WTC11 (cell line): ENCODE measurements at regions of chr4 and their contacts with region 1.

Region 1: DNA sequence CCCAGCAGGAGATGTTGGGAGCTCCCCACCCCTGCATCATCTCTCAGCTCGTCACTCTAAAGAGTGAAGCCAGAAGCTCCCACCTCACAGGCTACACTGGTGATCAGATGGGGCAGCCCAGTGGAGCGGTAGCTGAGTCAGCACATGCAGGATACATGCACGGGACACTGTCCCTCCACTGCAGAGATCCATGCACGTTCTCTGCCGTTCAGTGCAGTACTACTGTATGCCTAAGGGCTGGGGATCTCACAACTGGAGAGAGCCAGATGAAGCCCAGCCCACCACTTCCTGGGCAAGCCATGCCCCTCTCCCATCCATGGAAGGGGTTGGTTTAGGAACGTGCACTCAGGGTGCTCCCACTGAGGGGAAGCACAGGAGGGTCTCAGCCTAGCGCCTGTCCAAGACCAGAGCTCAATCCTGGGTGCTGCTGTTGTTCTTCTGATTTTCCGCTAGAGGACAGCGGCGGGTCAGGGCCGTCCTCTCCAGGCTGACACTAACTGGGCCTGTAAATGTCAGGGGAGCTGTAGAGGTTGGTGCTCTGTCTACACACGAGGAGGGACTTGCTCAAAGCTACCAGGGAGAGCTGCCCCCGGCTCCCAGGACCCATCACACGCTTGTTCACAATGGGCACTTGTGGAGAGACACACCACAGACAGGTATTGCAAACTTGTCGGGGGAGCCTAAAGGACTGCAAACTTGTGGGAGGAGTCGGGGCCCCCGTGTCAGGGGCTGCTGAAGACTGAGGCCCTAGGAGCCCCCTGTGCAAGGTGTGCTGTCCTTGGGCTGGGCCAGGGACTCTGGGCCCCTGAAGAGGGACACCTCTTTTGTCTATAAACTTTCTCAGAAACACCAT is 18.2 kb upstream of the ABLIM2 start:
- DNase-seq: peak; percentile 62
- ATAC-seq: peak; percentile 96
- H3K4me3 Mint-ChIP-seq: no peak overlapping the region
- H3K27ac Mint-ChIP-seq: no peak overlapping the region
- H3K4me1 Mint-ChIP-seq: no peaks in the 10 kb centered on the region
- H3K27me3 Mint-ChIP-seq: no peaks in the 10 kb centered on the region
- CTCF ChIP-seq: peak; percentile 51; the same call in 1 of the 2 replicates

Region 2: DNA sequence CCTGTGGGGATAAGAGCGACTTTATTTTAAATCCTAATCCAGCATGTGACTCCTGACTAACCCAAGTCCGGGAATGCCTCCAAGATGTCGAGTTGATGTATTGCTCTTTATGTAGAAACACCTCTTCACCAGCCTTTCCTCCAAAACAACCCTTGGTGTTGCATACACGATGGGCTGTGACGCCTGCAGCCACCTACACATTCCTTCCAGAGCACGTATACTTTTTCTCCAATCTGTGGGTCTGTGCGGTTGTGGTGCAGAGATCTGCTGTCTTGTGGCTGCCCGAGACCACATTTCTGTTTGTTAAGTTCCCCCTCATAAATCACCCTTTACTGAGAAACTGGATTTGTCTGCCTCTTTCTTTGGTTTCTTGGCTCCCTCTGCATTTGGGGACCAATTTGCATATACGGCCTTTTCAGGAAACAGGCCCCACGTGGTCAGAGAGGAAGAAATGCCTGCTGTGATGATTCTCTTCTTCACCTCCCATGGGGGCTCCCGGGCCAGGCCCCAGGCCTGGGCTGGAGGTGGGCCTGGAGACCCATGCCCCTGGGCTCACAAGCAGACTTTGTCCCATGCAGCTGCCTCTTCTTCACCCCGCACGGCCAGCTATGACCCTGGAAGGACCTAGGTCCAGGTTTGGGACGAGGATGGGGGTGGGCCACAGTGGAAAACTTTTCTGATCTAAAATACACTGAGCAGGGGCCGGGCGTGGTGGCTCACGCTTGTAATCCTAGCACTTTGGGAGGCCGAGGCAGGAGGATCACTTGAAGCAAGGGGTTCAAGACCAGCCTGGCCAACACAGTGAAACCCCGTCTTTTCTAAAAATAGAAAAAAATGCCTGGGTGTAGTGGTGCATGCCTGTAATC is 215.8 kb before region 1 on chr4:
- CTCF ChIA-PET with region 1: no interaction called
- POLR2A ChIA-PET with region 1: no interaction called
- DNase-seq: no peak
- ATAC-seq: no peak
- H3K4me3 Mint-ChIP-seq: no peak overlapping the region
- H3K27ac Mint-ChIP-seq: peak overlapping the region; percentile 61
- H3K4me1 Mint-ChIP-seq: peaks cover 40% of the 10 kb centered on the region
- H3K27me3 Mint-ChIP-seq: no peaks in the 10 kb centered on the region
- CTCF ChIP-seq: no peak

Region 3: GRCh38 chr4:8050555-8051206 is 126.1 kb before region 1 on chr4:
- CTCF ChIA-PET with region 1: interaction called, 16 read pairs
- POLR2A ChIA-PET with region 1: interaction called, 3 read pairs
- DNase-seq: peak; percentile 81
- ATAC-seq: peak; percentile 73
- H3K4me3 Mint-ChIP-seq: peak overlapping the region; percentile 43; the same call in 1 of the 2 replicates
- H3K27ac Mint-ChIP-seq: peak overlapping the region; percentile 99
- H3K4me1 Mint-ChIP-seq: peaks cover 53% of the 10 kb centered on the region
- H3K27me3 Mint-ChIP-seq: peaks cover 4% of the 10 kb centered on the region; the same call in 1 of the 2 replicates
- CTCF ChIP-seq: no peak

Region 4: DNA sequence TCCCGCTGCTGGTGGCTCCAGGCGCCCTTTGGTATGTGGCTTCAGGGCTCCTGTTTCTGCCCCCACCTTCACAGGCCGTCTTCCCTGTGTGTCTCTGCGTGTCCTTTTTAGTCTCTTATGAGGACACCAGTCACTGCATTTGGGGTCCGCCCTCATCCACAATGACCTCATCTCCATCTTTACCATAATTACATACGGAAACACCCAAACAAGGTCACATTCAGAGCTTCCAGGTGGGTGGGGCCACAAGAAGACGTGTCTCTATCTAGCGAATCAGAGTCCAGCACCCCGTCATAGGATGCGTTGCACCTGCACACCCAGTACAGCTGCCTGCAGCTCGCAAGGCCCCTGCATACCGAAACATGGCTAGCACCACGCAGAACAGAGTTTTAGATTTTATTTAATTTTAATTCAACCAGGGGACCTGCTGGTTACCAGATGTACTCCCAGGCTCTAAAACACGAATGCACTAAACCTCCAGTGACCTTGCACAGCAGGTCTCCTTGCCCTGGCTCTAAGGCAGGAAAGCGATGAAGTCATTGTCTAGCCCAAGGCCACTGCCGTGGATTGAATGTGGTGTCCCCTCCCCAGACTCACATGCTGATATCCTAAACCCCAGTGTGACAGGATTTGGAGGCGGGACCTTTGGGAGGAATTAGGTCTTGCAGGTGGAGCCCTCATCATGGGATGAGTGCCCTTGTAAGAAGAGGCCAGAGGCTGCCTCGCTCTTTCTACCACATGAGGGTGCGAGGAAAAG is 48.5 kb before region 1 on chr4:
- CTCF ChIA-PET with region 1: interaction called, 11 read pairs
- POLR2A ChIA-PET with region 1: no interaction called
- DNase-seq: no peak
- ATAC-seq: peak; percentile 50
- H3K4me3 Mint-ChIP-seq: no peak overlapping the region
- H3K27ac Mint-ChIP-seq: no peak overlapping the region; the same call in 1 of the 2 replicates
- H3K4me1 Mint-ChIP-seq: peaks cover 15% of the 10 kb centered on the region
- H3K27me3 Mint-ChIP-seq: no peaks in the 10 kb centered on the region
- CTCF ChIP-seq: no peak

Region 5: DNA sequence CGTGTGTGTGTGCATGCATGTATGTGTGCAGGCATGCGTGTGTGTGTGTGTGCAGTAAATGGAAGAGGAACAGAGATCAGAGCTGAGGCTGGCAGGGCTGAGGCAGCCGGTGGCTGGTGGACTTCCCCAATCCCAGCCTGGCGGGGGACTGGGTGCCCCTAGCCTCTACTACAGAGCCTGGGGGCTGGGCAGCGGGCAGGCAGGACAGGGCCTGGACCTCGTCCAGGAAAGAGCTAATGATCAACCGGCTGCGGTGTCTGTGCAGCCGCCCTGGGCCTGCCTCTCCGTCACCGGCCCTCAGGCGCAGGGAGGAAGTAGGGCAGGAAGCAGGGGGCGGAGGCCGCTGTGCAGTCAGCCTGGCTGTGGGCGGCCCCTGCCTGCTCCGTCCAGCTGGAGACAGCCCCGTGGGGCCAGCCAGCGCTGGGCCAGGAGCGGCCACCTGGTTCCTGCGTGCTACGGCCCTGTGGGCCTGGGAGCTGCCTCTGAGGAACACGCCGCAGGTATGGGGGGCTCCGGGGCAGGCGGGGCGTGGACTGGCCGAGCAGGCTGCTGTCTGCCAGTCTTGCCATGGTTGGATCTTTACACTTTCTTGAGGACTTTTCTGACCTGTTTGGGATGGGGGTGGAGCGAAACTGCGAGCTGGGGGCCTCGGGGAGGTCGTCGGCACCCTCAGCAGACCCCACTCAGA is 22.3 kb after region 1 on chr4 and contains the start of gene SH3TC1:
- CTCF ChIA-PET with region 1: interaction called, 43 read pairs
- POLR2A ChIA-PET with region 1: no interaction called
- DNase-seq: no peak
- ATAC-seq: no peak
- H3K4me3 Mint-ChIP-seq: no peak within 1 kb of the TSS
- H3K27ac Mint-ChIP-seq: peak within 1 kb of the TSS; percentile 78; the same call in 1 of the 2 replicates
- H3K4me1 Mint-ChIP-seq: no peaks in the 10 kb centered on the region
- H3K27me3 Mint-ChIP-seq: no peaks in the 10 kb centered on the region
- CTCF ChIP-seq: no peak
- total RNA-seq, gene SH3TC1: 0.42 to 0.64 TPM (median 0.55 TPM) in 3 replicates

Region 6: GRCh38 chr4:8241895-8242696 is 65.3 kb after region 1 on chr4:
- CTCF ChIA-PET with region 1: interaction called, 87 read pairs
- POLR2A ChIA-PET with region 1: interaction called, 5 read pairs
- DNase-seq: peak; percentile 95
- ATAC-seq: peak; percentile 89
- H3K4me3 Mint-ChIP-seq: no peak overlapping the region
- H3K27ac Mint-ChIP-seq: no peak overlapping the region
- H3K4me1 Mint-ChIP-seq: no peaks in the 10 kb centered on the region
- H3K27me3 Mint-ChIP-seq: no peaks in the 10 kb centered on the region; the same call in 1 of the 2 replicates
- CTCF ChIP-seq: peak; percentile 96

Region 7: GRCh38 chr4:8336412-8337075 is 159.8 kb after region 1 on chr4:
- CTCF ChIA-PET with region 1: no interaction called
- POLR2A ChIA-PET with region 1: no interaction called
- DNase-seq: no peak
- ATAC-seq: no peak
- H3K4me3 Mint-ChIP-seq: no peak overlapping the region
- H3K27ac Mint-ChIP-seq: no peak overlapping the region
- H3K4me1 Mint-ChIP-seq: no peaks in the 10 kb centered on the region
- H3K27me3 Mint-ChIP-seq: no peaks in the 10 kb centered on the region
- CTCF ChIP-seq: no peak

Region 8: DNA sequence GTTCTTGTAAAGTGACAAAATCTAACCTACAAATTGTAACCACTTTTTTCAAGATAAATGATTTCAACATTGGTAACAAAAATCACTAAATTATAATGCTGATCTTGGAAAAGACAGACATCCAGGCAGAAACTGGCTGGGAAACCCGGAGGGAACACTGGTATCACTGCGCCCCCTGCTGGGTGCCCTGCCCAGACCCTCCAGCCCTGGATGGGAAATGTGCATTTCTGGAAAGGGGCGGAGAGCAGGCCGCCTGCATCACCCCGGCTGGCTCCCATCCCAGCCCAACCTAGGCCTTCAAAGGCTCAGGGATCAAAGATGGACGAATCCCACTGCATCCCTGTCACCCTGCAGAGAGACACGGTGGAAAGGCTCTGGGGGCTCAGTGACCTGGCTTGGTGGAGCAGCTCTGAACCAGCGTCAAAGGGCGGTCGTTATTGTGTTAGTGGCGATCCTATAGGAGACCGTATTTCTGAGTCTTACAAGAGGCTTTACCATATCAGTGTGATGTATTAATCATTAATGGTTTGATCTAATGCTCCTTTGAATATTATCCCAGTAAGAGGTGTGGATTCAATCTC is 226.5 kb after region 1 on chr4:
- CTCF ChIA-PET with region 1: interaction called, 18 read pairs
- POLR2A ChIA-PET with region 1: no interaction called
- DNase-seq: peak; percentile 88
- ATAC-seq: peak; percentile 93
- H3K4me3 Mint-ChIP-seq: no peak overlapping the region
- H3K27ac Mint-ChIP-seq: peak overlapping the region; percentile 86
- H3K4me1 Mint-ChIP-seq: peaks cover 4% of the 10 kb centered on the region; the same call in 1 of the 2 replicates
- H3K27me3 Mint-ChIP-seq: peaks cover 2% of the 10 kb centered on the region; the same call in 1 of the 2 replicates
- CTCF ChIP-seq: peak; percentile 68; the same call in 1 of the 2 replicates